ENCODE measurements at regions of chr2 and their contacts with region 1.

Region 1: DNA sequence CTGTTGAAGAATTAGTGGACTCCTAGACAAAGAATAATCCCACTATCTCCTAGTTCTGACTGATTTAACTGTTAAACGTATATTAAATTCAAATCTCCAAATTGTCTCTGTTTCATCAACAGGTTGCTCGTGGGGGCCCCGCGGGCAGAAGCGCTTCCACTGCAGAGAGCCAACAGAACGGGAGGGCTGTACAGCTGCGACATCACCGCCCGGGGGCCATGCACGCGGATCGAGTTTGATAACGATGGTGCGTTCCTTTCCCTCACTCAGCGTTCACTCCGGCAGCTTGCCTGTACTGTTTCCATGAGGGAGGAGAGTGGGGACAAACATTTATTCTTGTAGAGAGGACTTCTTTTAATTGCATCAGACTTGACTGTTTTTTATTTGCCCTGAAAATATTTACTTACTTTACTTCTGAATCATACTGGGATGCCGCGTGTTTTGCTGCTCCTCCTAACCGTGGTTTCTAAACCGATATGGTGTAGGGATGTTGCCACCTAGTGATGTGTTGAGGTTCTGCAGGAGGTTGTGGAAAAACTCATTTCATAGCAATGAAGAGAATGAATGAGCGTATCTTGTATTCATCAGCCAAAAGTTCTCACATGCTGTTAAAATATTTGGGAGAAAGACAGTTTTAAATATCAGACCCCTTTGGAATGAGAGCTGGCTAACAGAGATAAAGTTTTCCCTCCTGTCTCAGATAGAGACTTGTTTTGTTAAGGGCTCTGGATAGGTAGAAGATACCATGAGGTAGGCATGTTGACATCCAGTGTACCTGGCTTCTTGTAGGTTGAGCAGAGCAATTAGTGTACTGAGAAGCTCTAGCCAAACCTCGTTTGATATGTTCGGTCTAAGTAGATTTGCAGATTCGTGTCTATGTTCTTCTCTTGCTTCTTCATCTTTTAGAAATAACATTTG is 38.3 kb downstream of the ITGA6 start:
- DNase-seq: peak; percentile 63
- ATAC-seq: peak; percentile 31
- H3K4me3 Mint-ChIP-seq: no peak overlapping the region
- H3K27ac Mint-ChIP-seq: peak overlapping the region; percentile 11
- H3K4me1 Mint-ChIP-seq: peaks cover 47% of the 10 kb centered on the region
- H3K27me3 Mint-ChIP-seq: no peaks in the 10 kb centered on the region
- CTCF ChIP-seq: peak; percentile 78

Region 2: DNA sequence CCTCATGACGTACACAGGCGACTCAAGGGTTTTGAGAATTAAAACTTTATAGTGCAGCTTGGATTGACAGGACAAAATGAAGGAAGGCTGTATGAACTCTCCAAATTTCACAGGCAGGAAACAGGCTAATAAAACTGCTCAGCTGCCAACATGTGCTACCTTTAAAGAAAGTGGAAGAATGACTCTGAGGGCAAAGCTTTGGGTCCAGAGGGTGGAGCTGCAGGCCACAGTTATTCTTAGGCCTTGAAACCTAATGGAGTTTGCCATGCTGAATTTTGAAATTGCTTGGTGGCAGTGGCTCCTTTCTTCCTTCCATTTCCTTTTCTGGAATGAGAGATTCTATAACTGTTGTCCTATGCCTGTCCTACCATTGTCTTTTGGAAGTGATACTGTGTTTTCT is 508.6 kb before region 1 on chr2:
- CTCF ChIA-PET with region 1: no interaction called
- POLR2A ChIA-PET with region 1: no interaction called
- DNase-seq: no peak
- ATAC-seq: no peak
- H3K4me3 Mint-ChIP-seq: no peak overlapping the region
- H3K27ac Mint-ChIP-seq: 0 out of 2 replicates have a peak overlapping the region, but pooled peaks have one; percentile 4
- H3K4me1 Mint-ChIP-seq: peaks cover 4% of the 10 kb centered on the region
- H3K27me3 Mint-ChIP-seq: no peaks in the 10 kb centered on the region
- CTCF ChIP-seq: no peak

Region 3: GRCh38 chr2:172128484-172128883 is 337.2 kb before region 1 on chr2:
- CTCF ChIA-PET with region 1: interaction called, 48 read pairs
- POLR2A ChIA-PET with region 1: no interaction called
- DNase-seq: no peak
- ATAC-seq: no peak
- H3K4me3 Mint-ChIP-seq: no peak overlapping the region
- H3K27ac Mint-ChIP-seq: no peak overlapping the region
- H3K4me1 Mint-ChIP-seq: peaks cover 27% of the 10 kb centered on the region
- H3K27me3 Mint-ChIP-seq: peaks cover 51% of the 10 kb centered on the region
- CTCF ChIP-seq: no peak

Region 4: GRCh38 chr2:172200495-172201085 is 265.1 kb before region 1 on chr2:
- CTCF ChIA-PET with region 1: interaction called, 13 read pairs
- POLR2A ChIA-PET with region 1: no interaction called
- DNase-seq: peak; percentile 33
- ATAC-seq: no peak
- H3K4me3 Mint-ChIP-seq: no peak overlapping the region
- H3K27ac Mint-ChIP-seq: no peak overlapping the region
- H3K4me1 Mint-ChIP-seq: peaks cover 11% of the 10 kb centered on the region
- H3K27me3 Mint-ChIP-seq: peaks cover 3% of the 10 kb centered on the region; the same call in 1 of the 2 replicates
- CTCF ChIP-seq: peak; percentile 49

Region 5: GRCh38 chr2:172270278-172271079 is 195.2 kb before region 1 on chr2:
- CTCF ChIA-PET with region 1: interaction called, 10 read pairs
- POLR2A ChIA-PET with region 1: no interaction called
- DNase-seq: peak; percentile 62
- ATAC-seq: peak; percentile 44
- H3K4me3 Mint-ChIP-seq: no peak overlapping the region
- H3K27ac Mint-ChIP-seq: peak overlapping the region; percentile 40
- H3K4me1 Mint-ChIP-seq: peaks cover 46% of the 10 kb centered on the region
- H3K27me3 Mint-ChIP-seq: peaks cover 23% of the 10 kb centered on the region
- CTCF ChIP-seq: no peak

Region 6: DNA sequence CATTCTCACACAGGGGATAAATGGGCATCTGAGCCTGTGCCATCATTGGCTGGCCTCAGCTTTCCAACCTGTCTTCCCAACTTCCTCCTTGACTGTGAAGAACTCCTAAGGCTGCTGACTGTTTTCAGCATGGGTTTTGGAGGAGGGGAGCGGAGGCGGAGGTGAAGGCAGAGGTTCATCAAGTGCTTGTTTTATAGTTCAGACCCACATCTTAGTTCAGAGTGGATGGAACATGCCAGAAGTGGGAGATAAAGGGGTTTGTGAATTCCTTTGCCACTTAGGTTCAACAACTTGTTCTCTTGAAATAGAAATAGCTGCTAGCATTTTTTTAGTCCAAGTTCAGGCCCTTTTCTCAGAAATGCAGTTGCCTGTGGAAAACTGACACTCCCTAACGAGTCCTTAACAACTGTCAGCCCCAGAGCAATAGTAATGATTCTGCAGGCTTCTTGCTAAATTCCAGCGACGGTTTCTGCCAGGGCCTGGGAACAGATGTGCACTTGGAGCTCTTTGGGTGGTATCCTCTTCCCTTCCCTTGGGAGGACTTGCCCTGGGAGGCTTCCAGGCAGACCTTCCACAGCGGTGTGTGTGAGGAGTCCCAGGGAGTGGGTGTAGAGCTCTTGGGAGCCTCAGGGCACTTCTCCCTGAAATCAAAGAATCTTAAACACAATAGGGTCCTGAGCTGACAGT is 68.4 kb before region 1 on chr2:
- CTCF ChIA-PET with region 1: interaction called, 29 read pairs
- POLR2A ChIA-PET with region 1: no interaction called
- DNase-seq: no peak
- ATAC-seq: no peak
- H3K4me3 Mint-ChIP-seq: no peak overlapping the region
- H3K27ac Mint-ChIP-seq: no peak overlapping the region
- H3K4me1 Mint-ChIP-seq: peaks cover 12% of the 10 kb centered on the region
- H3K27me3 Mint-ChIP-seq: peaks cover 7% of the 10 kb centered on the region
- CTCF ChIP-seq: no peak

Region 7: DNA sequence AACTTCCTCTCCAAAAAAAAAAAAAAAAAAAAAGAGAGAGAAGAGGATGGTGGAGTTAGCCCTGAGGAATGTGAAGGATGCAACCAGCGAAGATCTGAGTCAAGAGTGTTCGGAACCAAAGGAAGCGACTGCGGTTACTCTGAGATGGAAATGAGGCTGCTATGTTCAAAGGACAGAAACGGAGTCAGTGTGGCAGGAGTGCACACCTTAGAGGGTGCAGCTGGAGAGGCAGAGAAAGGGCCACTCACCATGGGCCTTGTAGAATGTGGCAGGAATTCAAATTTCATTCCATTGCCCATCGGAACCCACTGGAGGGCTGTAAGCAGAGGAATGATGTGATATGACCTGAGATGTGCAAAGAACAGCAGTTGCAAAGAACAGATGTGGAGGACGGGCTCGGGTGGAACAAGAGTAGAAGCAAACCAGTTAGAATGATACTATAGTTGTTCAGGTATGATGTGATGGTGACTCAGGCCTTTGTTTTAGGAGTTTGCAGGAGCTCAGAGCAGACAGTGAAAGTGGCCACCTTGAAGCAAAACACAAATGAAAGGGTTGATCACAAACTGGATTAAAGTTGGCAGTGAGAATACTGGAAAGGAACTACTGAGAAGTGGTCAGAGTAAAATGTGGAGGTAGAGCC is 15.6 kb before region 1 on chr2:
- CTCF ChIA-PET with region 1: interaction called, 38 read pairs
- POLR2A ChIA-PET with region 1: no interaction called
- DNase-seq: no peak
- ATAC-seq: no peak
- H3K4me3 Mint-ChIP-seq: no peak overlapping the region
- H3K27ac Mint-ChIP-seq: peak overlapping the region; percentile 60
- H3K4me1 Mint-ChIP-seq: peaks cover 70% of the 10 kb centered on the region
- H3K27me3 Mint-ChIP-seq: no peaks in the 10 kb centered on the region
- CTCF ChIP-seq: no peak

Region 8: GRCh38 chr2:172623249-172623965 is 157.7 kb after region 1 on chr2:
- CTCF ChIA-PET with region 1: no interaction called
- POLR2A ChIA-PET with region 1: no interaction called
- DNase-seq: no peak
- ATAC-seq: no peak
- H3K4me3 Mint-ChIP-seq: no peak overlapping the region
- H3K27ac Mint-ChIP-seq: no peak overlapping the region
- H3K4me1 Mint-ChIP-seq: no peaks in the 10 kb centered on the region
- H3K27me3 Mint-ChIP-seq: no peaks in the 10 kb centered on the region; the same call in 1 of the 2 replicates
- CTCF ChIP-seq: no peak